ENCODE measurements at regions of chr15 and their contacts with region 1.

Region 1: GRCh38 chr15:89057504-89058133 is 30.6 kb upstream of the ABHD2 start:
- ATAC-seq: peak; percentile 64 to 100 (median 86)
- H3K4me3 ChIP-seq: no peak overlapping the region
- H3K27ac ChIP-seq: no peak overlapping the region
- H3K4me1 ChIP-seq: no peaks in the 10 kb centered on the region

Region 2: GRCh38 chr15:88769161-88769971 is 288.3 kb before region 1 on chr15:
- in situ Hi-C with region 1: no loop called
- ATAC-seq: peak in 3 of 8 experiments; percentile 29 to 59 (median 59)
- H3K4me3 ChIP-seq: no peak overlapping the region
- H3K27ac ChIP-seq: no peak overlapping the region
- H3K4me1 ChIP-seq: no peaks in the 10 kb centered on the region

Region 3: DNA sequence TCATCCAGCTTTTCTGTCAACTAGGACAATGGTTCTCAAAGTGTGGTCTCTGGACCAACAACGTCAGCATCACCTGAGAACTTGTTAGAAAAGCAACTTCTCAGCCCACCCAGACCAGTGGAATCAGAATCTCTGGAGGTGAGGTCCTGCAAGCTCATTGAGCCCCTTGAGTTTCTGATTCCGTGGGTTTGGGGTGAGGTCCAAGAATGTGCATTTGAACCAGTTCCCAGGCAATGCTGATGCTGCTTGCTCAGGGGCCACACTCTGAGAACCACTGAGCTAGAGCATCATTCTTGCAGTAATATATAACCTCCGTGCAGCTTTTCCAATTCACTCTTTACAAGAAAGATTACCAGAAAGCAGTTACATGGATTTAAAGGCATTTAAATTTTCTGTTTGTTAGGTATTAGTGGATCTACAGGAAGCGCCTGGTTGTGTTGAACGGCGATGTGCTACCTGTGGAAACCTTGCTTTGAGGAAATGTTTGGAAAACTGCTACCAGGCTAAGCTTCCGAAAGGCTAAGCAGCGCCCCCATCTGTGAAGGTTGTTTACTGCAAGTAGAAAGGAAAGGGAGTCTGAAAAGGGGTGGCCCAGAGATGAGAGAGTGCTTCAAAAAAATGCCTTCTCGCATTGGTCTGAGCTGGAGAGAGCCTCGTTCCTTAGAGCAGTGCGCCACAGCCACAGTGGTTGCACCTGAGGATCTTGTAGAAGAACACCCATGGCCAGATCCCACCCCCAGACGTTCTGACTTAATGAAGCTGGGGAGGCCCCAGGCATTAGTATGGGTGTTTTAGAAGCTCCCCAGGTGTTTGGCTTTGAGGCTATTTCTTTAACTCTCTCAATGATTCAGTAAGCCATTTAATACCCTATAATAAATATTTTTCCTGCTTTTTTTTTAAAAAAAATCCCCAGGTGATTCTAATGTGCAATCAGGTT is 113.8 kb after region 1 on chr15:
- in situ Hi-C with region 1: loop called in 2 of 9 experiments (anchors 10 to 25 kb)
- ATAC-seq: peak in 3 of 8 experiments; percentile 42 to 62 (median 44)
- H3K4me3 ChIP-seq: no peak overlapping the region
- H3K27ac ChIP-seq: no peak overlapping the region
- H3K4me1 ChIP-seq: peaks cover 0 to 4% of the 10 kb centered on the region in 2 donors

Measured in motor neuron (in vitro differentiated cells).